ENCODE measurements at regions of chr4 and their contacts with region 1.

Region 1: GRCh38 chr4:122758033-122758432 is 25.5 kb downstream of the BBS12 start:
- DNase-seq: no peak
- ATAC-seq: no peak
- H3K4me3 Mint-ChIP-seq: no peak overlapping the region
- H3K27ac Mint-ChIP-seq: no peak overlapping the region
- H3K4me1 Mint-ChIP-seq: peaks cover 23% of the 10 kb centered on the region
- H3K27me3 Mint-ChIP-seq: peaks cover 14% of the 10 kb centered on the region

Region 2: DNA sequence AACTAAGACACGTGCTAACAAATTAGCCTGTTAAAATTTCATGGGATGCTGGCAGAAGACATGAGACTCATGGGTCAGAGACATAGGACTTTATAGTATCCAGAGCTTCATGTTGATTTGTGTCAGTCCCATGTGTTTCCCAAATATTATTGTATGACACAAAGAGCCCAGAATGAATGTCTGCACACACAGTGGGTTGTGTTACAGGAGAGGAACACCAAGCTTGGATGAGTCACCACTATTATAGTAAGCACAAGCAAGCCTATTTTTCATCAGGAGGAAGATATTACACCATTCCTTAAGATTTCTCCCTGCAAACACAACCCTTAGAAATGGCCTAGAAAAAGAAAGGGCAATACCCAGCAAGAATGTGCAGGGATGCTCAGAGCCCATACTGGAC is 10.2 kb before region 1 on chr4:
- CTCF ChIA-PET with region 1: interaction called, 10 read pairs
- POLR2A ChIA-PET with region 1: no interaction called
- DNase-seq: no peak
- ATAC-seq: no peak
- H3K4me3 Mint-ChIP-seq: no peak overlapping the region
- H3K27ac Mint-ChIP-seq: no peak overlapping the region
- H3K4me1 Mint-ChIP-seq: peaks cover 12% of the 10 kb centered on the region
- H3K27me3 Mint-ChIP-seq: peaks cover 18% of the 10 kb centered on the region

Region 3: DNA sequence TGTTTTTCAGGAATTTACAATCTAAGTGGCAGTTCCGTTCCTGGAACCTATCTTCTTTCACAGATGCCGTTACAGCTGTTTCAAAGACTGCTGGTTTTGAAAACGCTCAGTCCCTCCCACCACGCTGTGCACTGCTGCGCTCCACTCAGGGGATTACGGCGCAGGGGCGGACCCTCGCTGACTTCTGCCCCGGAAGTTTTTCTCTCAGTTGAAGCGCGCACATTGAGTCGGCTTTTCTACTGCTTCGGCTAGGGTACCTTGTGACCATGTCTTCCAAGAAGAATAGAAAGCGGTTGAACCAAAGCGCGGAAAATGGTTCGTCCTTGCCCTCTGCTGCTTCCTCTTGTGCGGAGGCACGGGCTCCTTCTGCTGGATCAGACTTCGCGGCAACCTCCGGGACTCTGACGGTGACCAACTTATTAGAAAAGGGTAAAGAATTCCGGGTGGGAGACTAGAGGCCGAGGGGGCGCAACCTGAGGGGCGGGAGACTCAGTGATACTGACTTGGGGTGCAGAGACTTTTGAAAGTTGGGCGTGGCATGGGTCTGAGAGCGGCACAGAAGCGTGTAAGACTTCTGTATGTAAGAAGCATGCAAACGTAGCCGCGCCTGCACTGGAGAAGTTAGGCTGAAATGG is 165.0 kb after region 1 on chr4:
- CTCF ChIA-PET with region 1: interaction called, 15 read pairs
- POLR2A ChIA-PET with region 1: interaction called, 3 read pairs
- DNase-seq: peak; percentile 95
- ATAC-seq: peak; percentile 97
- H3K4me3 Mint-ChIP-seq: no peak overlapping the region
- H3K27ac Mint-ChIP-seq: peak overlapping the region; percentile 98
- H3K4me1 Mint-ChIP-seq: peaks cover 16% of the 10 kb centered on the region
- H3K27me3 Mint-ChIP-seq: no peaks in the 10 kb centered on the region

Region 4: GRCh38 chr4:122930862-122931261 is 172.8 kb after region 1 on chr4:
- CTCF ChIA-PET with region 1: interaction called, 22 read pairs
- POLR2A ChIA-PET with region 1: no interaction called
- DNase-seq: no peak
- ATAC-seq: no peak
- H3K4me3 Mint-ChIP-seq: no peak overlapping the region
- H3K27ac Mint-ChIP-seq: no peak overlapping the region
- H3K4me1 Mint-ChIP-seq: peaks cover 26% of the 10 kb centered on the region
- H3K27me3 Mint-ChIP-seq: no peaks in the 10 kb centered on the region